ENCODE measurements at regions of chr3 and their contacts with region 1.

Region 1: GRCh38 chr3:112990672-112991602 is at the start of gene GTPBP8:
- DNase-seq: peak; percentile 62 to 82 (median 78)
- ATAC-seq: peak; percentile 91
- H3K4me3 ChIP-seq: peak within 1 kb of the TSS; percentile 86
- H3K4me3 Mint-ChIP-seq: peak within 1 kb of the TSS; percentile 90 to 99 (median 95)
- H3K27ac ChIP-seq: peak within 1 kb of the TSS; percentile 86
- H3K27ac Mint-ChIP-seq: peak within 1 kb of the TSS; percentile 91 to 98 (median 95)
- H3K4me1 ChIP-seq: peaks cover 19 to 27% of the 10 kb centered on the region in 2 donors
- H3K4me1 Mint-ChIP-seq: peaks cover 30 to 85% (median 77%) of the 10 kb centered on the region in 7 donors
- H3K27me3 ChIP-seq: no peaks in the 10 kb centered on the region
- H3K27me3 Mint-ChIP-seq: no peaks in the 10 kb centered on the region
- total RNA-seq, gene GTPBP8: 12.6 to 49.1 (median 26.4) TPM

Region 2: GRCh38 chr3:112128843-112129727 is 861.9 kb before region 1 on chr3:
- CTCF ChIA-PET with region 1: no interaction called
- POLR2A ChIA-PET with region 1: no interaction called
- intact Hi-C with region 1: loop called (anchors 5 kb)
- DNase-seq: peak in 8 of 9 donors; percentile 39 to 88 (median 83)
- ATAC-seq: peak; percentile 82
- H3K4me3 ChIP-seq: no peak overlapping the region
- H3K4me3 Mint-ChIP-seq: peak overlapping the region; percentile 23 to 100 (median 64)
- H3K27ac ChIP-seq: peak overlapping the region; percentile 82
- H3K27ac Mint-ChIP-seq: peak overlapping the region; percentile 87 to 95 (median 93)
- H3K4me1 ChIP-seq: peaks cover 41 to 72% of the 10 kb centered on the region in 2 donors
- H3K4me1 Mint-ChIP-seq: peaks cover 49 to 92% (median 90%) of the 10 kb centered on the region in 7 donors
- H3K27me3 ChIP-seq: no peaks in the 10 kb centered on the region
- H3K27me3 Mint-ChIP-seq: no peaks in the 10 kb centered on the region

Region 3: GRCh38 chr3:112464264-112464663 is 526.7 kb before region 1 on chr3:
- CTCF ChIA-PET with region 1: no interaction called
- POLR2A ChIA-PET with region 1: no interaction called
- intact Hi-C with region 1: loop called in 1 of 2 experiments (anchors 10 kb)
- DNase-seq: peak in 7 of 9 donors; percentile 28 to 56 (median 47)
- ATAC-seq: peak; percentile 83
- H3K4me3 ChIP-seq: peak overlapping the region; percentile 7
- H3K4me3 Mint-ChIP-seq: peak overlapping the region; percentile 39 to 84 (median 74)
- H3K27ac ChIP-seq: peak overlapping the region; percentile 43
- H3K27ac Mint-ChIP-seq: peak overlapping the region; percentile 55 to 96 (median 86)
- H3K4me1 ChIP-seq: peaks cover 54 to 63% of the 10 kb centered on the region in 2 donors
- H3K4me1 Mint-ChIP-seq: peaks cover 40 to 95% (median 88%) of the 10 kb centered on the region in 7 donors
- H3K27me3 ChIP-seq: no peaks in the 10 kb centered on the region
- H3K27me3 Mint-ChIP-seq: no peaks in the 10 kb centered on the region

Region 4: GRCh38 chr3:112676659-112677234 is 314.2 kb before region 1 on chr3:
- CTCF ChIA-PET with region 1: no interaction called
- POLR2A ChIA-PET with region 1: no interaction called
- intact Hi-C with region 1: loop called in 1 of 2 experiments (anchors 2 kb)
- DNase-seq: peak in 7 of 9 donors; percentile 5 to 76 (median 30)
- ATAC-seq: peak; percentile 94
- H3K4me3 ChIP-seq: no peak overlapping the region
- H3K4me3 Mint-ChIP-seq: peak overlapping the region in 4 of 10 donors; percentile 11 to 80 (median 16)
- H3K27ac ChIP-seq: no peak overlapping the region
- H3K27ac Mint-ChIP-seq: peak overlapping the region in 5 of 9 donors; percentile 20 to 94 (median 24)
- H3K4me1 ChIP-seq: peaks cover 23 to 39% of the 10 kb centered on the region in 2 donors
- H3K4me1 Mint-ChIP-seq: peaks cover 30 to 69% (median 34%) of the 10 kb centered on the region in 7 donors
- H3K27me3 ChIP-seq: no peaks in the 10 kb centered on the region
- H3K27me3 Mint-ChIP-seq: no peaks in the 10 kb centered on the region

Region 5: DNA sequence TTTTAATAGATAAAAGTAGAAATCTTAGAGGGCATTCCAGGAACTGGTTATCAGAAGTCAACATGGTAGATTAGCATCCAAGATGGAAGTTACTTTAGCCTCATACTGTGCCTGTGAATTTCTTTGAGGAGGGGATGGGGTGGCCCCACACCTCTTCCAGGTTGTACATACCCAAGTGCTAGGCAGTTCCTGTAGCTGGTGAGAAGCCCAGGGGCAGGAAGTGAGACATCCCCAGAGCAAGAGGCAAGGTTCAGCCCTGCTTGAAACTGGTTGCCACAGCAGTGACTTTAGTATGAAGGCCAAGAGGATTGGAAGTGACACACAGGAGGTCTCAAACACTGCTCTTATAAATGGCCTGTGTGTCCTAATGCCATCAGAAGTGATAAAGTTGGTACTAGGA is 11.7 kb after region 1 on chr3:
- CTCF ChIA-PET with region 1: interaction called, 7 read pairs
- POLR2A ChIA-PET with region 1: interaction called, 168 read pairs
- intact Hi-C with region 1: loop called (anchors 1 kb)
- DNase-seq: peak in 7 of 9 donors; percentile 27 to 53 (median 41)
- ATAC-seq: peak; percentile 50
- H3K4me3 ChIP-seq: no peak overlapping the region
- H3K4me3 Mint-ChIP-seq: peak overlapping the region in 8 of 10 donors; percentile 19 to 70 (median 48)
- H3K27ac ChIP-seq: peak overlapping the region; percentile 78
- H3K27ac Mint-ChIP-seq: peak overlapping the region; percentile 74 to 98 (median 89)
- H3K4me1 ChIP-seq: peaks cover 22 to 61% of the 10 kb centered on the region in 2 donors
- H3K4me1 Mint-ChIP-seq: peaks cover 33 to 99% (median 91%) of the 10 kb centered on the region in 7 donors
- H3K27me3 ChIP-seq: no peaks in the 10 kb centered on the region
- H3K27me3 Mint-ChIP-seq: no peaks in the 10 kb centered on the region

Region 6: GRCh38 chr3:113696658-113697499 is 705.9 kb after region 1 on chr3:
- CTCF ChIA-PET with region 1: no interaction called
- POLR2A ChIA-PET with region 1: no interaction called
- intact Hi-C with region 1: loop called in 1 of 2 experiments (anchors 5 kb)
- DNase-seq: peak; percentile 96 to 100 (median 99)
- ATAC-seq: peak; percentile 93
- H3K4me3 ChIP-seq: peak overlapping the region; percentile 82
- H3K4me3 Mint-ChIP-seq: no peak overlapping the region
- H3K27ac ChIP-seq: peak overlapping the region; percentile 99
- H3K27ac Mint-ChIP-seq: no peak overlapping the region
- H3K4me1 ChIP-seq: peaks cover 11 to 27% of the 10 kb centered on the region in 2 donors
- H3K4me1 Mint-ChIP-seq: peaks cover 23 to 36% (median 29%) of the 10 kb centered on the region in 7 donors
- H3K27me3 ChIP-seq: no peaks in the 10 kb centered on the region
- H3K27me3 Mint-ChIP-seq: no peaks in the 10 kb centered on the region

Measured in naive thymus-derived CD4-positive, alpha-beta T cell (primary cell).